ENCODE measurements at regions of chrX and their contacts with region 1.

Region 1: GRCh38 chrX:9456250-9457074 is 8.4 kb upstream of the TBL1X start:
- DNase-seq: peak; percentile 82
- H3K4me3 Mint-ChIP-seq: peak overlapping the region; percentile 53
- H3K27ac Mint-ChIP-seq: peak overlapping the region; percentile 93
- H3K4me1 Mint-ChIP-seq: peaks cover 25% of the 10 kb centered on the region
- H3K27me3 Mint-ChIP-seq: peaks cover 2% of the 10 kb centered on the region

Region 2: GRCh38 chrX:9164535-9165425 is 291.7 kb before region 1 on chrX:
- intact Hi-C with region 1: loop called (anchors 5 kb)
- DNase-seq: no peak
- H3K4me3 Mint-ChIP-seq: peak overlapping the region; percentile 11
- H3K27ac Mint-ChIP-seq: peak overlapping the region; percentile 77
- H3K4me1 Mint-ChIP-seq: peaks cover 30% of the 10 kb centered on the region
- H3K27me3 Mint-ChIP-seq: no peaks in the 10 kb centered on the region

Region 3: GRCh38 chrX:9258421-9259104 is 197.9 kb before region 1 on chrX:
- intact Hi-C with region 1: loop called (anchors 10 kb)
- DNase-seq: no peak
- H3K4me3 Mint-ChIP-seq: peak overlapping the region; percentile 37
- H3K27ac Mint-ChIP-seq: peak overlapping the region; percentile 41
- H3K4me1 Mint-ChIP-seq: peaks cover 20% of the 10 kb centered on the region
- H3K27me3 Mint-ChIP-seq: no peaks in the 10 kb centered on the region

Region 4: GRCh38 chrX:9318213-9318612 is 138.2 kb before region 1 on chrX:
- intact Hi-C with region 1: no loop called
- DNase-seq: peak; percentile 72
- H3K4me3 Mint-ChIP-seq: no peak overlapping the region
- H3K27ac Mint-ChIP-seq: no peak overlapping the region
- H3K4me1 Mint-ChIP-seq: peaks cover 13% of the 10 kb centered on the region
- H3K27me3 Mint-ChIP-seq: no peaks in the 10 kb centered on the region

Region 5: GRCh38 chrX:9440116-9440844 is 16.2 kb before region 1 on chrX:
- intact Hi-C with region 1: loop called (anchors 1 kb)
- DNase-seq: no peak
- H3K4me3 Mint-ChIP-seq: no peak overlapping the region
- H3K27ac Mint-ChIP-seq: peak overlapping the region; percentile 70
- H3K4me1 Mint-ChIP-seq: peaks cover 12% of the 10 kb centered on the region
- H3K27me3 Mint-ChIP-seq: no peaks in the 10 kb centered on the region

Region 6: GRCh38 chrX:9927698-9928482 is 471.4 kb after region 1 on chrX:
- intact Hi-C with region 1: no loop called
- DNase-seq: no peak
- H3K4me3 Mint-ChIP-seq: no peak overlapping the region
- H3K27ac Mint-ChIP-seq: no peak overlapping the region
- H3K4me1 Mint-ChIP-seq: no peaks in the 10 kb centered on the region
- H3K27me3 Mint-ChIP-seq: peaks cover 2% of the 10 kb centered on the region